CD8-positive, alpha-beta T cell (primary cell): ENCODE measurements at regions of chr19 and their contacts with region 1.

Region 1: GRCh38 chr19:55624109-55625003 is at the start of gene ZNF784:
- DNase-seq: peak; percentile 87 to 97 (median 93)
- ATAC-seq: peak; percentile 76
- H3K4me3 ChIP-seq: peak within 1 kb of the TSS; percentile 67 to 88
- H3K4me3 Mint-ChIP-seq: peak within 1 kb of the TSS; percentile 91
- H3K27ac ChIP-seq: peak within 1 kb of the TSS; percentile 72 to 92
- H3K27ac Mint-ChIP-seq: peak within 1 kb of the TSS; percentile 98
- H3K4me1 ChIP-seq: peaks cover 50% of the 10 kb centered on the region
- H3K4me1 Mint-ChIP-seq: peaks cover 56% of the 10 kb centered on the region
- H3K27me3 ChIP-seq: no peaks in the 10 kb centered on the region
- H3K27me3 Mint-ChIP-seq: no peaks in the 10 kb centered on the region
- CTCF ChIP-seq: no peak
- total RNA-seq, gene ZNF784: 11.7 to 12.2 TPM

Region 2: DNA sequence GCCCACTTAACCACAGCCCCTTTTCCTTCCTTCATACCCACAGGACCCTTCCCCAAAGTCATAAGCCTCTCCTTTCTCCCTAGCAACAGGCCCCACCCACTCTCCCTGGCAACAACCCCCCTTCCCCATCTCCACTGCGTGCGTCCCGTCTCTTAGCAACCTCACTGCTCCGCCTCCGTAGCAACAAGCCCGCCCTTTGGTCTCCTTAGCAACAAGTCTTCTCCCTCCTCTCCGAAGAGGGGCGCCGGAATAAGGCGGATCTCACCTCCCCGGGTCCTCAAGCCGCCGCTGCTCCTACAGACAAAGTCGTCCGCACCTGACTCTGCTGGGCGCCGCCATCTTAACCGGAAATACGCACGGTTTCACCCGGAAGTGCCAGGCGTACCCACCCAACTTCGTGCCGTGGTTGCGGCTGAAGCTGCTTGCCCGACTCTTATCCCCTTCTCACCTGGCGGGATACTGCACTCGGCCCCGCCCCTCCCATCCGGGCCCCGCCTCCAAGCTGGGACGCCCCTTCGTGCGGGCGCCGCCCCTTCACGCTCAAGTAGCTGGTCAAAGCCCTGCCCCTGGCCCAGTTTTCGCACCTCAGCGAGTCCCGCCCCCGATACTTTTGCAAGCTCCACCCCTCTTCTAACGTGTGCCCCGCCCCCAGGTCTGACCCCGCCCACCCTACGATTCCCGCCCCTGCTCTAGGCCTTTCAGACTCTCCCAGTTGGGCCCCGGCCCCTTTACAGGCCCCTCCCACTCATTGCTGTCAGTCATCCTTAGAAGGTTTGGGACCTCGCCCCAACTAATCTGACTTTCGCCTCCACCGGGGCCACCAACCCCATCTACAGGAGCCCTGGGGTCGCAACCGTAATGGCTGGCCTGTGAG is 344.3 kb before region 1 on chr19 and contains the start of gene HSPBP1:
- CTCF ChIA-PET with region 1: no interaction called
- POLR2A ChIA-PET with region 1: no interaction called
- intact Hi-C with region 1: loop called in 1 of 2 experiments (anchors 1 kb)
- DNase-seq: peak; percentile 87 to 98 (median 95)
- ATAC-seq: peak; percentile 86
- H3K4me3 ChIP-seq: peak within 1 kb of the TSS; percentile 73 to 85
- H3K4me3 Mint-ChIP-seq: peak within 1 kb of the TSS; percentile 96
- H3K27ac ChIP-seq: peak within 1 kb of the TSS; percentile 89 to 90
- H3K27ac Mint-ChIP-seq: peak within 1 kb of the TSS; percentile 98
- H3K4me1 ChIP-seq: peaks cover 32% of the 10 kb centered on the region
- H3K4me1 Mint-ChIP-seq: peaks cover 44% of the 10 kb centered on the region
- H3K27me3 ChIP-seq: no peaks in the 10 kb centered on the region
- H3K27me3 Mint-ChIP-seq: no peaks in the 10 kb centered on the region
- CTCF ChIP-seq: no peak
- total RNA-seq, gene HSPBP1: 18.8 to 18.9 TPM

Region 3: GRCh38 chr19:55467236-55468053 is 156.9 kb before region 1 on chr19:
- CTCF ChIA-PET with region 1: interaction called, 29 read pairs
- POLR2A ChIA-PET with region 1: no interaction called
- intact Hi-C with region 1: no loop called
- DNase-seq: peak; percentile 38 to 83 (median 66)
- ATAC-seq: peak; percentile 95
- H3K4me3 ChIP-seq: no peak overlapping the region
- H3K4me3 Mint-ChIP-seq: no peak overlapping the region
- H3K27ac ChIP-seq: no peak overlapping the region
- H3K27ac Mint-ChIP-seq: no peak overlapping the region
- H3K4me1 ChIP-seq: peaks cover 3% of the 10 kb centered on the region
- H3K4me1 Mint-ChIP-seq: peaks cover 3% of the 10 kb centered on the region
- H3K27me3 ChIP-seq: no peaks in the 10 kb centered on the region
- H3K27me3 Mint-ChIP-seq: no peaks in the 10 kb centered on the region
- CTCF ChIP-seq: peak; percentile 92

Region 4: GRCh38 chr19:55516878-55517620 is 107.3 kb before region 1 on chr19:
- CTCF ChIA-PET with region 1: interaction called, 10 read pairs
- POLR2A ChIA-PET with region 1: no interaction called
- intact Hi-C with region 1: loop called in 1 of 2 experiments (anchors 1 kb)
- DNase-seq: peak; percentile 77 to 95 (median 90)
- ATAC-seq: peak; percentile 100
- H3K4me3 ChIP-seq: peak overlapping the region; percentile 12 to 60
- H3K4me3 Mint-ChIP-seq: peak overlapping the region; percentile 79
- H3K27ac ChIP-seq: peak overlapping the region; percentile 40 to 74
- H3K27ac Mint-ChIP-seq: peak overlapping the region; percentile 61
- H3K4me1 ChIP-seq: peaks cover 5% of the 10 kb centered on the region
- H3K4me1 Mint-ChIP-seq: peaks cover 3% of the 10 kb centered on the region
- H3K27me3 ChIP-seq: no peaks in the 10 kb centered on the region
- H3K27me3 Mint-ChIP-seq: peaks cover 2% of the 10 kb centered on the region
- CTCF ChIP-seq: peak; percentile 76

Region 5: DNA sequence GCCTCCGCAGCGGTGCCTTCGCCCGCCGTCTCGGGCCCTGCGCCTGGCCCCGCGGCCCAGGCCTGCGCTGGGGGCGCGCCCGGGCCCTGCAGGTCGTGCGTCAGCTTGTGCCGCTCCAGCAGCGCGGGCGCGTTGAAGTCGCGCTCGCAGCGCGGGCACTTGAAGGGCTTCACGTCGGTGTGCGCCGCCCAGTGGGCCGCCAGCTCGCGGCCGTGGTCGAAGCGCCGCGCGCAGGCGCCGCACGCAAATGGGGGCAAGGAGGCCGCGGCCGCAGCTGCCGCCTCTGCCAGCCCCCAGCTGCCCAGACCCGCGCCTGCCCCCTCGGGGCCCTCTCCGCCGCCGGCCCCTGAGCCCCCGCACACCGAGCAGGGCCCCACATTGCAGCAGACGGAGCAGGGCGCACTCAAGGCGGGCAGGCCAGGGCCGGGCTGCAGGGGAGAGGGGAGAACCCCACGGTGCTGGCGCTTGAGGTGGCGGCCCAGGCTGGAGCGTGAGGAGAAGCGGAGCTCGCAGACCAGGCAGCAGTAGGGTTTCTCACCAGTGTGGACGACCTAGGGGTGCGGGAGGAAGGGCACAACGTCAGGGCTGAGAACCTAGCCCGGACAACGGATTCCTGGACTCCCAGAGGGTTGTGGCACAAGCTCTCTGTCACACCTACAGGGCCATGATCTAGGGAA is 31.1 kb before region 1 on chr19:
- CTCF ChIA-PET with region 1: no interaction called
- POLR2A ChIA-PET with region 1: no interaction called
- intact Hi-C with region 1: no loop called
- DNase-seq: peak in 1 of 9 experiments; percentile 9
- ATAC-seq: no peak
- H3K4me3 ChIP-seq: no peak overlapping the region
- H3K4me3 Mint-ChIP-seq: no peak overlapping the region
- H3K27ac ChIP-seq: no peak overlapping the region
- H3K27ac Mint-ChIP-seq: no peak overlapping the region
- H3K4me1 ChIP-seq: peaks cover under 1% of the 10 kb centered on the region
- H3K4me1 Mint-ChIP-seq: peaks cover 8% of the 10 kb centered on the region
- H3K27me3 ChIP-seq: no peaks in the 10 kb centered on the region
- H3K27me3 Mint-ChIP-seq: no peaks in the 10 kb centered on the region
- CTCF ChIP-seq: no peak

Region 6: GRCh38 chr19:55605207-55605636 is 19.1 kb before region 1 on chr19:
- CTCF ChIA-PET with region 1: interaction called, 50 read pairs
- POLR2A ChIA-PET with region 1: interaction called, 17 read pairs
- intact Hi-C with region 1: loop called (anchors 1 kb)
- DNase-seq: peak; percentile 90 to 99 (median 98)
- ATAC-seq: peak; percentile 78
- H3K4me3 ChIP-seq: peak overlapping the region; percentile 60 to 80
- H3K4me3 Mint-ChIP-seq: peak overlapping the region; percentile 86
- H3K27ac ChIP-seq: peak overlapping the region; percentile 60 to 91
- H3K27ac Mint-ChIP-seq: peak overlapping the region; percentile 90
- H3K4me1 ChIP-seq: peaks cover 24% of the 10 kb centered on the region
- H3K4me1 Mint-ChIP-seq: peaks cover 60% of the 10 kb centered on the region
- H3K27me3 ChIP-seq: no peaks in the 10 kb centered on the region
- H3K27me3 Mint-ChIP-seq: no peaks in the 10 kb centered on the region
- CTCF ChIP-seq: no peak

Region 7: DNA sequence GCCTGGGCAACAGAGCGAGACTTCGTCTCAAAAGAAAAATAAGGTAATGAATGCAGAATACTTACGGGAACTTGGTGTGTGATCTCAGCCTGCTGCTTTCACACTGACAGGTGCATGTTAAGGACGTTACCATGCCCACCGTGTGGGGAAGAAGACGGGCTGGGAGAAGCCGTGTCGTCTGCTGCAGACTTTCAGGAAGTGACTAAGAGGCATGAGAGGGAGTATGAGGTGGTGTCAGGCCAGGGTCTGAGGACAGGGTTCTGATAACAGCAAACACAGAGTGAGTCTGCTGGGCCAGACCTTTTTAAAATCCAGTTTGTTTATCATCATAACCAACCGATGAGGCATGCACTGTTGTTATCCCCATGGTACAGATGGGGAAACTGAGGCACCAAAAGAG is 537.9 kb after region 1 on chr19:
- CTCF ChIA-PET with region 1: no interaction called
- POLR2A ChIA-PET with region 1: no interaction called
- intact Hi-C with region 1: no loop called
- DNase-seq: no peak
- ATAC-seq: no peak
- H3K4me3 ChIP-seq: no peak overlapping the region
- H3K4me3 Mint-ChIP-seq: no peak overlapping the region
- H3K27ac ChIP-seq: no peak overlapping the region
- H3K27ac Mint-ChIP-seq: no peak overlapping the region
- H3K4me1 ChIP-seq: no peaks in the 10 kb centered on the region
- H3K4me1 Mint-ChIP-seq: peaks cover 5% of the 10 kb centered on the region
- H3K27me3 ChIP-seq: no peaks in the 10 kb centered on the region
- H3K27me3 Mint-ChIP-seq: peaks cover 5% of the 10 kb centered on the region
- CTCF ChIP-seq: no peak

Region 8: DNA sequence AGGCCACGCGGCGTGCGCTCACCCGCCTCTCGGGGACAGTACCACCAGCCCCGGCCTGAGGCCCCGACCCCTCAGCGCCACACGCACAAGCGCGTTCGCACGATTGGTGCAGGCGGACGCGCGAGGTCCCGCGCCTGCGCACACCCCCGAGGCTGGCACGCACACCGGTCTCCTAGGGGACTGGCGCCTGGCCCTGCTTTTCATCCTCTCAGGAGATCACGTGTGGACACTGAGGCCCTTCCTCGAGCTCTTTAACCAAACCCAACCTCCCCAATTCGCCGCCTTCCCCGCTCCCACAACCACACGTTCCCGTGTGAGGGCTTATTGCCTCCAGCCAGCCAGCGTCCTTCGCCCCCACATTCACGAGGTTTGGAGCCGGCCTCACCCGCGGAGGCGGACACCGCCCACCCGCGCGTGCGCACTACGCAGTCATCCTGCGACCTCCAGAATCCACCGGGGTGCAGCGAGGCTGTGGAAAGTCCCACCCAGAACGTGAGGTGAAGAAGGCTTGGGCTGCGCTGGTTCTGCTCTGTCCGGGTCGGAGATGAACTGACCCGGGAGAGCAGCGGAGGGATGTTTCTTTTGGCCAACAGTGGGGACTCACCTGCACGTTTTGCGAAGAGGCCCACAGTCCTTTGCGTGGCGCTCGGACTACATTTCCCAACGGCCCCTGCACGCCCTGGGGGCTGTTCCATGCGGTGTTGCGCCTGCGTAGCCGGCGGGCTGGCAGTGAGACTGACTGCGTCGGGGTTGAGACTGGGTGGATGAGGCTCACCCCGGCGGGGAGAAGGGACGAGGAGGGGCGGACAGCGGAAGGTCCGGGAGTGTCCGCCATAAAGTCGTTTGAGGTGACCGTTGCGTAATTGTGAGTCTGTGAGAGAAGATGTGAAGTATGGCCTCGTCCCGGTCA is 853.3 kb after region 1 on chr19:
- CTCF ChIA-PET with region 1: no interaction called
- POLR2A ChIA-PET with region 1: no interaction called
- intact Hi-C with region 1: no loop called
- DNase-seq: peak; percentile 21 to 84 (median 63)
- ATAC-seq: peak; percentile 66
- H3K4me3 ChIP-seq: peak overlapping the region; percentile 23 to 67
- H3K4me3 Mint-ChIP-seq: peak overlapping the region; percentile 96
- H3K27ac ChIP-seq: peak overlapping the region; percentile 56 to 84
- H3K27ac Mint-ChIP-seq: peak overlapping the region; percentile 95
- H3K4me1 ChIP-seq: no peaks in the 10 kb centered on the region
- H3K4me1 Mint-ChIP-seq: peaks cover 18% of the 10 kb centered on the region
- H3K27me3 ChIP-seq: no peaks in the 10 kb centered on the region
- H3K27me3 Mint-ChIP-seq: peaks cover 19% of the 10 kb centered on the region
- CTCF ChIP-seq: no peak